ENCODE measurements at regions of chr12 and their contacts with region 1.

Region 1: GRCh38 chr12:92987362-92987761 is 58.3 kb upstream of the EEA1 start:
- DNase-seq: peak in 2 of 4 donors; percentile 72 to 84
- ATAC-seq: peak; percentile 98
- H3K4me3 ChIP-seq: no peak overlapping the region
- H3K27ac ChIP-seq: peak overlapping the region; percentile 65 to 71
- H3K4me1 ChIP-seq: peaks cover 5 to 13% of the 10 kb centered on the region in 2 donors
- H3K27me3 ChIP-seq: no peaks in the 10 kb centered on the region
- CTCF ChIP-seq: peak; percentile 36 to 54

Region 2: DNA sequence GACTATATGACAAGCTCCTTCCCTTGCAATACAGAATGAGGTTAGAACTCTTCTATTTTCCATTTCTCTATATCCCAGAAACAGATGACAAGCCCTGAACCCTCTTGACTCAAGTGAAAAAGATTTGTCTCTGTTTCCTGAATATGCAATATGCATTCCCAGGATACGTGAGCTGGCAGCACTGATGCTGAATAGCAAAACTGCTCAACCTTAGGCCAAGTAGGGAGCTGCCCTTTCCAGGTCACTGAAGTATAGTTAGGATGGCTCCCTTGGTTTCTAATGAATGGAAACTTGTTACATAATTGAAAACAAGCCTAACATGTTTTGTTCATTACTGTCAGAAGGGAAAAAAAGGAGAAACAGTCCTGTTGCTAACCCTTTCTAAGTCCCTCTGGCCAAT is 332.4 kb before region 1 on chr12:
- intact Hi-C with region 1: no loop called
- DNase-seq: no peak
- ATAC-seq: no peak
- H3K4me3 ChIP-seq: no peak overlapping the region
- H3K27ac ChIP-seq: no peak overlapping the region
- H3K4me1 ChIP-seq: no peaks in the 10 kb centered on the region
- H3K27me3 ChIP-seq: no peaks in the 10 kb centered on the region
- CTCF ChIP-seq: no peak

Region 3: GRCh38 chr12:93089805-93090569 is 102.6 kb after region 1 on chr12:
- intact Hi-C with region 1: no loop called
- DNase-seq: no peak
- ATAC-seq: peak; percentile 38
- H3K4me3 ChIP-seq: no peak overlapping the region
- H3K27ac ChIP-seq: no peak overlapping the region
- H3K4me1 ChIP-seq: no peaks in the 10 kb centered on the region
- H3K27me3 ChIP-seq: no peaks in the 10 kb centered on the region
- CTCF ChIP-seq: no peak

Region 4: DNA sequence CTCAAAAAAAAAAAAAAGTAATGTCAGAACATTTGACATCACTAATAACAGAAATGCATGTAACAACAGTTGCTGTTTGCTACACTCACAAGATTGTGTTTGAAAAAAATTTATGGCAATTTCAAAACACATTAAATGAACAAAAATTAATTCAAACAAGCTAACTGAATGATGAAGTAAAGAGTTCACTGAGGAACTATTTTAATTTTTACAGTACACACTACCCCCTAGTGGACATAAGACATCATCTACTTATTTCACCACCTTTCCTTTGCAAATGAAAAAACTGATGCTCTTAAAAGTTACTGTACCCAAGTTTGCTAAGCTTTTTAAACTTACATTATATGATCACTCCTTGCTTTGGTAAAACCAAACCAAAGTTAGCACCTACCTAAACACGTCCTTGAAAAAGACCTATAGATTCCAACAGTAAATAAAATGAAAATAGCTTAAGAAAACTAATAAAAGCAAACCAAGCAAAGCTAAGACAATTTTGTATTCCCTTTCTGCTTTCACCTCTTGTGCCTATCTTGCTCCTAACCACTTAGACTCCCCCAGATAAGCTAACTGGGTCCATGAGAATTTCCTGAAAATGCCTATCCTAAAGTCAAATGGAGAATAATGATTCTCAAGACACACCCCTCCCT is 432.1 kb after region 1 on chr12:
- intact Hi-C with region 1: loop called in 1 of 2 experiments (anchors 10 kb)
- DNase-seq: peak in 1 of 4 donors; percentile 66
- ATAC-seq: peak; percentile 87
- H3K4me3 ChIP-seq: no peak overlapping the region
- H3K27ac ChIP-seq: no peak overlapping the region
- H3K4me1 ChIP-seq: peaks cover 20 to 47% of the 10 kb centered on the region in 2 donors
- H3K27me3 ChIP-seq: no peaks in the 10 kb centered on the region
- CTCF ChIP-seq: peak; percentile 64 to 69

Measured in left lung (tissue), 14 donors.